Mammary epithelial cell (primary cell): ENCODE measurements at regions of chr4 and their contacts with region 1.

Region 1: GRCh38 chr4:84952009-84952408 is 14.5 kb downstream of the WDFY3 start:
- DNase-seq: peak; percentile 99
- H3K4me3 ChIP-seq: peak overlapping the region in 2 of 3 experiments; percentile 2 to 18
- H3K27ac ChIP-seq: peak overlapping the region; percentile 96
- H3K4me1 ChIP-seq: peaks cover 27% of the 10 kb centered on the region
- H3K27me3 ChIP-seq: no peaks in the 10 kb centered on the region
- CTCF ChIP-seq: no peak

Region 2: GRCh38 chr4:84878090-84878489 is 73.9 kb before region 1 on chr4:
- CTCF ChIA-PET with region 1: no interaction called
- dilution Hi-C with region 1: no loop called
- in situ Hi-C with region 1: no loop called
- intact Hi-C with region 1: loop called (anchors 1 kb)
- DNase-seq: peak; percentile 57
- H3K4me3 ChIP-seq: no peak overlapping the region
- H3K27ac ChIP-seq: no peak overlapping the region
- H3K4me1 ChIP-seq: peaks cover 5% of the 10 kb centered on the region
- H3K27me3 ChIP-seq: no peaks in the 10 kb centered on the region
- CTCF ChIP-seq: no peak

Region 3: DNA sequence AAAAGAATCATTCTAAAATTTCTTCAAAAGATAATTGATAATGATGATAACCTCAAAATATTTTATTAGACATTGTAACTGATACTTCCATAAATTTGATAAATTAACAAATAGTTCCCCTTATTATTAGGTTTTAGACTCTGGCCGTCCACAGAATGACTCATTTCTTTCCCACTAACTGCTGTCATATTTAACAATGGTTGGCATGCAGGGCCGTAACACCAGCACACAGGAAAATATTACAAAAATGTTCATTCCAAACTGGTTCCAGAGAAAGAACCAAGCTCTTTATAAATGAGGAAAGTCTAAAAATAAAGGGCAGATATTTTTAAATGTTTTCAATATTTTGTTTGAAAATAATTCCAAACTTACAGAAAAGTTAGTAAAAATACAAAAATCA is 13.7 kb before region 1 on chr4:
- CTCF ChIA-PET with region 1: no interaction called
- dilution Hi-C with region 1: no loop called
- in situ Hi-C with region 1: no loop called
- intact Hi-C with region 1: loop called (anchors 1 kb)
- DNase-seq: peak; percentile 33
- H3K4me3 ChIP-seq: peak overlapping the region in 1 of 3 experiments; percentile 4
- H3K27ac ChIP-seq: peak overlapping the region; percentile 67
- H3K4me1 ChIP-seq: peaks cover 13% of the 10 kb centered on the region
- H3K27me3 ChIP-seq: no peaks in the 10 kb centered on the region
- CTCF ChIP-seq: no peak

Region 4: GRCh38 chr4:85291226-85291625 is 339.2 kb after region 1 on chr4:
- CTCF ChIA-PET with region 1: no interaction called
- dilution Hi-C with region 1: no loop called
- in situ Hi-C with region 1: no loop called
- intact Hi-C with region 1: no loop called
- DNase-seq: no peak
- H3K4me3 ChIP-seq: no peak overlapping the region
- H3K27ac ChIP-seq: no peak overlapping the region
- H3K4me1 ChIP-seq: no peaks in the 10 kb centered on the region
- H3K27me3 ChIP-seq: no peaks in the 10 kb centered on the region
- CTCF ChIP-seq: no peak